Endothelial cell of umbilical vein (primary cell): ENCODE measurements at regions of chr3 and their contacts with region 1.

Region 1: GRCh38 chr3:49454458-49454857 is 15.6 kb upstream of the DAG1 start:
- DNase-seq: no peak
- H3K4me3 ChIP-seq: no peak overlapping the region
- H3K27ac ChIP-seq: no peak overlapping the region
- H3K4me1 ChIP-seq: no peaks in the 10 kb centered on the region
- H3K27me3 ChIP-seq: no peaks in the 10 kb centered on the region
- CTCF ChIP-seq: no peak
- POLR2A ChIP-seq: no peak

Region 2: GRCh38 chr3:49120438-49121131 is 333.9 kb before region 1 on chr3 and contains the start of gene USP19:
- CTCF ChIA-PET with region 1: interaction called, 13 read pairs
- POLR2A ChIA-PET with region 1: no interaction called
- dilution Hi-C with region 1: no loop called
- intact Hi-C with region 1: no loop called
- DNase-seq: peak; percentile 94
- H3K4me3 ChIP-seq: peak within 1 kb of the TSS; percentile 44 to 71 (median 65)
- H3K27ac ChIP-seq: peak within 1 kb of the TSS; percentile 58
- H3K4me1 ChIP-seq: peaks cover 12% of the 10 kb centered on the region
- H3K27me3 ChIP-seq: no peaks in the 10 kb centered on the region
- CTCF ChIP-seq: no peak
- POLR2A ChIP-seq: peak; percentile 92
- total RNA-seq, gene USP19: 39.1 and 42.2 TPM in 2 replicates

Region 3: DNA sequence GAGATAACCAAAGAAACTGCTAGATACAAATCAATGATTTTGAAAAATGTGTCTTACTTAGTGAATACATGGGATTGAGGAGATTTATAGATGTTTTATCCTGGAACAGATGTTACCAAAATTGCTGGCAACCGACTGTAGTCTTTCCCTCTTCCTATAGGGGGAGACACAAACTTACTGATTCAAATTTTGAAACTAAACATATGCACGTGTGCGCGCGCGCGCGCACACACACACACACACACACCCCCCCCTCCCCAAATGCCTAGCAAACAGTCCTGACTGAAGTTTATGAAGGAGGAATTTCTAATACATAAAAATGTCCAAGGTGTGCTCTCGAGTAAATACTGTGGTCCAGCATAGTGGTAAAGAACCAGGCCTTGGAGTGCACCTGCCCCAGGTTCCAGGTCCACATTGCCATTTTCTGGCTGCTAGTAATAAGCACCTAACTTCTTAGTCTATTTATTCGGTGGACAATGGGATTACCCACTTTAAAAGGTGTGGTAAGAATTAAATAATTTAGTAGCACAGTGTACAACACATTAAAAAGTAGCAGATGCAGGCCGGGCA is 158.9 kb before region 1 on chr3:
- CTCF ChIA-PET with region 1: interaction called, 31 read pairs
- POLR2A ChIA-PET with region 1: no interaction called
- dilution Hi-C with region 1: no loop called
- intact Hi-C with region 1: loop called (anchors 1 kb)
- DNase-seq: peak; percentile 55
- H3K4me3 ChIP-seq: no peak overlapping the region
- H3K27ac ChIP-seq: no peak overlapping the region
- H3K4me1 ChIP-seq: peaks cover 8% of the 10 kb centered on the region
- H3K27me3 ChIP-seq: no peaks in the 10 kb centered on the region
- CTCF ChIP-seq: peak; percentile 50 to 52
- POLR2A ChIP-seq: no peak

Region 4: GRCh38 chr3:49339945-49340800 is 114.3 kb before region 1 on chr3 and contains the start of gene USP4:
- CTCF ChIA-PET with region 1: interaction called, 118 read pairs
- POLR2A ChIA-PET with region 1: interaction called, 3 read pairs
- dilution Hi-C with region 1: no loop called
- intact Hi-C with region 1: loop called (anchors 1 kb)
- DNase-seq: peak; percentile 91
- H3K4me3 ChIP-seq: peak within 1 kb of the TSS; percentile 65 to 75 (median 75)
- H3K27ac ChIP-seq: peak within 1 kb of the TSS; percentile 80
- H3K4me1 ChIP-seq: peaks cover 28% of the 10 kb centered on the region
- H3K27me3 ChIP-seq: no peaks in the 10 kb centered on the region
- CTCF ChIP-seq: peak; percentile 45 to 52
- POLR2A ChIP-seq: peak; percentile 87
- total RNA-seq, gene USP4: 61.3 and 63.0 TPM in 2 replicates

Region 5: DNA sequence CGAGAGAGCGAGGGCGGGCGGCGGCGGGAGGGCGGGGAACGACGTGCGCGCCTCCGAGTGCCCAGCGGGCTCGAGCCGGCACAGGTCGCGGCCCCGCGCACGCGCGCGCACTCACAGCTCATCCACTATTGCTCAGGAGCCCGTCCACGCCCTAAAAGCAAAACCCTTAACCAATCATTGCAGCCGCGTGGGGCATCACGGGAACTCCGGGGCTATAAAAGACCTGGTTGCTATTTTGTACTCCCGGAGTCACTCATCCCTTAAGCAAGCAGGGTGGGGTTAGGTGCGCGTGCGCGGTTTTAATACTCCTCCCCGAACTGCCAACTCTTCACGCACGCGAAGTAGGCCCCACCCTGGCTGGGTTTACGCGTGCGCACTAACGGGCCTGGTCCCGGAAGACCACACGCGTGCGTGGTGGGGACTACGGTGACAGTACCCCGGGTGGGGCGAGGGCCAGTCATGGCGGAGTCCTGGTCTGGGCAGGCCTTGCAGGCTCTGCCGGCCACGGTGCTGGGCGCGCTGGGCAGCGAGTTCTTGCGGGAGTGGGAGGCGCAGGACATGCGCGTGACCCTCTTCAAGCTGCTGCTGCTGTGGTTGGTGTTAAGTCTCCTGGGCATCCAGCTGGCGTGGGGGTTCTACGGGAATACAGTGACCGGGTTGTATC is 42.4 kb before region 1 on chr3 and contains the starts of genes RHOA and TCTA:
- CTCF ChIA-PET with region 1: interaction called, 13 read pairs
- POLR2A ChIA-PET with region 1: no interaction called
- dilution Hi-C with region 1: no loop called
- intact Hi-C with region 1: no loop called
- DNase-seq: peak; percentile 100
- H3K4me3 ChIP-seq: peak within 1 kb of the TSS; percentile 69 to 100 (median 99)
- H3K27ac ChIP-seq: peak within 1 kb of the TSS; percentile 79
- H3K4me1 ChIP-seq: peaks cover 35% of the 10 kb centered on the region
- H3K27me3 ChIP-seq: no peaks in the 10 kb centered on the region
- CTCF ChIP-seq: no peak
- POLR2A ChIP-seq: peak; percentile 99
- total RNA-seq, gene RHOA: 571 and 580 TPM in 2 replicates
- total RNA-seq, gene TCTA: 18.6 and 21.9 TPM in 2 replicates

Region 6: GRCh38 chr3:49469936-49470713 is 15.7 kb after region 1 on chr3 and contains the start of gene DAG1:
- CTCF ChIA-PET with region 1: interaction called, 28 read pairs
- POLR2A ChIA-PET with region 1: no interaction called
- dilution Hi-C with region 1: no loop called
- intact Hi-C with region 1: no loop called
- DNase-seq: peak; percentile 97
- H3K4me3 ChIP-seq: peak within 1 kb of the TSS; percentile 52 to 92 (median 81)
- H3K27ac ChIP-seq: peak within 1 kb of the TSS; percentile 61
- H3K4me1 ChIP-seq: peaks cover 17% of the 10 kb centered on the region
- H3K27me3 ChIP-seq: no peaks in the 10 kb centered on the region
- CTCF ChIP-seq: no peak
- POLR2A ChIP-seq: peak; percentile 81
- total RNA-seq, gene DAG1: 88.0 and 97.5 TPM in 2 replicates